CD8-positive, alpha-beta T cell (primary cell): ENCODE measurements at regions of chr9 and their contacts with region 1.

Region 1: GRCh38 chr9:131739980-131740648 is at the start of gene RAPGEF1:
- DNase-seq: peak; percentile 70 to 94 (median 82)
- ATAC-seq: peak; percentile 63
- H3K4me3 ChIP-seq: peak within 1 kb of the TSS; percentile 66 to 70
- H3K4me3 Mint-ChIP-seq: peak within 1 kb of the TSS; percentile 90
- H3K27ac ChIP-seq: peak within 1 kb of the TSS; percentile 21 to 38
- H3K27ac Mint-ChIP-seq: peak within 1 kb of the TSS; percentile 87
- H3K4me1 ChIP-seq: peaks cover 61% of the 10 kb centered on the region
- H3K4me1 Mint-ChIP-seq: peaks cover 56% of the 10 kb centered on the region
- H3K27me3 ChIP-seq: no peaks in the 10 kb centered on the region
- H3K27me3 Mint-ChIP-seq: no peaks in the 10 kb centered on the region
- CTCF ChIP-seq: peak; percentile 80
- total RNA-seq, gene RAPGEF1: 127 to 130 TPM

Region 2: GRCh38 chr9:131530920-131531832 is 208.9 kb before region 1 on chr9 and contains the start of gene UCK1:
- CTCF ChIA-PET with region 1: interaction called, 4 read pairs
- POLR2A ChIA-PET with region 1: no interaction called
- intact Hi-C with region 1: loop called in 1 of 2 experiments (anchors 5 kb)
- DNase-seq: peak; percentile 42 to 89 (median 68)
- ATAC-seq: peak; percentile 91
- H3K4me3 ChIP-seq: peak within 1 kb of the TSS; percentile 64 to 73
- H3K4me3 Mint-ChIP-seq: peak within 1 kb of the TSS; percentile 74
- H3K27ac ChIP-seq: peak within 1 kb of the TSS; percentile 51 to 53
- H3K27ac Mint-ChIP-seq: peak within 1 kb of the TSS; percentile 55
- H3K4me1 ChIP-seq: peaks cover 35% of the 10 kb centered on the region
- H3K4me1 Mint-ChIP-seq: peaks cover 35% of the 10 kb centered on the region
- H3K27me3 ChIP-seq: no peaks in the 10 kb centered on the region
- H3K27me3 Mint-ChIP-seq: no peaks in the 10 kb centered on the region
- CTCF ChIP-seq: no peak
- total RNA-seq, gene UCK1: 22.6 to 24.7 TPM

Region 3: GRCh38 chr9:131590908-131591844 is 148.9 kb before region 1 on chr9:
- CTCF ChIA-PET with region 1: interaction called, 151 read pairs
- POLR2A ChIA-PET with region 1: interaction called, 5 read pairs
- intact Hi-C with region 1: loop called (anchors 1 kb)
- DNase-seq: peak; percentile 56 to 88 (median 79)
- ATAC-seq: peak; percentile 91
- H3K4me3 ChIP-seq: no peak overlapping the region
- H3K4me3 Mint-ChIP-seq: no peak overlapping the region
- H3K27ac ChIP-seq: peak overlapping the region in 1 of 2 experiments; percentile 19
- H3K27ac Mint-ChIP-seq: peak overlapping the region; percentile 88
- H3K4me1 ChIP-seq: peaks cover 18% of the 10 kb centered on the region
- H3K4me1 Mint-ChIP-seq: peaks cover 23% of the 10 kb centered on the region
- H3K27me3 ChIP-seq: no peaks in the 10 kb centered on the region
- H3K27me3 Mint-ChIP-seq: no peaks in the 10 kb centered on the region
- CTCF ChIP-seq: peak; percentile 83

Region 4: DNA sequence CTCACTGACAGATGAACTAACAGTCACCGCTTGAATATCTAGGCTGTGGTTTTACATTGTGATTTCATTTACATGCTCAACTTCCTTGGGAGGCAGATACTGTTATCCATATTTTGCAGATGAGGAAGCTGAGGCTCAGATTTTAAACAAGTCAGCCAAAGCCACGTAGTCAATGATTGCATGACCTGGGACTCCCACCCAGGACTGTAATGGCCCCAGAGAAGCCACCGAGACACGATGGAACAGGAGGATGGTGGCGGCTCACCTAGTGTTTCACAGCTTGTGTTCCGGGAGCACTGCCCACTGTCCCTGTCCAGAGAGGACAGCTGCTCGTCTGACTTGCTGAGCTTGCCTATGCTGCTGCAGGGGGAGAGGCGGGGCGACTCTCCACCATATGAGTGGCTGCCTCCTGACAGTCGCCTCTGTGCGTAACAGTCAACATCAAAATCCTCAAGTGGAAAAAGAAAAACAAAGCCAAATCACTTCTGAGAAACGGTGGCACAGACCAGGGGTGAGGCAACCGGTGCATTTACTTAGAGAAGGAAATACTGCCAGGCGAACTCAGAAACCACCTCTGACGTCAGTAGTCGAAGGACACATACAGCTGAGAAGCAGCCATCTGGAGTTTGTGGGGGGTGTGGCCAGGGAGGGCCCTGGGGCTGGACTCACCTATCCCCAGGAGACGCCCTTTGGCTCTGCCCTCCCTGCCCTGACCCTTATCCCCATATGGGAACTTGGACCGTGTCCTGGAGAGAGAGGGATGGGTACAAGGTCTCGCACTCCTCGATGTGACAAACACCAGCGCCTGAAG is 112.3 kb before region 1 on chr9:
- CTCF ChIA-PET with region 1: interaction called, 10 read pairs
- POLR2A ChIA-PET with region 1: interaction called, 3 read pairs
- intact Hi-C with region 1: no loop called
- DNase-seq: peak in 8 of 9 experiments; percentile 39 to 96 (median 72)
- ATAC-seq: peak; percentile 79
- H3K4me3 ChIP-seq: peak overlapping the region; percentile 7 to 29
- H3K4me3 Mint-ChIP-seq: peak overlapping the region; percentile 39
- H3K27ac ChIP-seq: peak overlapping the region; percentile 77 to 89
- H3K27ac Mint-ChIP-seq: peak overlapping the region; percentile 93
- H3K4me1 ChIP-seq: peaks cover 27% of the 10 kb centered on the region
- H3K4me1 Mint-ChIP-seq: peaks cover 34% of the 10 kb centered on the region
- H3K27me3 ChIP-seq: no peaks in the 10 kb centered on the region
- H3K27me3 Mint-ChIP-seq: no peaks in the 10 kb centered on the region
- CTCF ChIP-seq: no peak

Region 5: DNA sequence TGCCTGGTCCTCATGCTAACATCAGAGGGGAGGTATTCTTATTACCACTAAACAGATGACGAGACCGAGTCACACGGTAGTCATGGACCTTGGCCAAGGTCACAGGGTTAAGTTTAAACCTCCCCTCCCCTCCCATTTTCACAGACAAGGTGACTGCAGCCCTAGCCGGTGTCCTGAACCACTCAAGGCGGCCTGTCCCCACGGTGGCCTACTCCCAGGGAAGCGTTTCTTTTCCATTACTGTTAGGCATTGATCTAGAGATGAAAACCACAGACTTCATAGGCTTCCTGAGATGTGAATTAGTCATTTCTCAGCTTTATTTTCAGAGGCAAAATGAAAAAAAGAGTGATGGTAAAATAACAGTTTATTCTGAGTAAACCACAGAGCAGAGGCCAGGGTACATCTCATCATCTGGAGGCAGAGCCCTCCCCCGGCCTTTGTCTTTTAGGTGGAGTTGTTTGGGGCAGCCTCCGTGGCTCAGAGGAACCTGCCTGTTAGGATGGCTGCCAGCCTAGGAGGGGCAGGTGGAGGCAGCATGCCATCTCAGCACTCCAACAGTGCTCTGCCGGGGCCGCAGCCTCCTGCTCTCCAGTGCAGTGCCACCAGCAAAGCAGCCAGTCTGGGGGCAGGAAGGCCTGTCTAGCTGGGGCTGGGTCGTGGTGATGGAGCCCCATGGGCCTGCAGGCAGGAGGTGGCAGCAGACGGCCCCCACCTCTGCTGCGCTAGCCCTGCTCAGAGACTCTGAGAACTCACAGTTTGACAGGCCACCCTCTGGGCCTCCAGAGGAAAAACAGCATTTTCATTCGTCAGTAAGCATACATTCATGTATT is 71.5 kb before region 1 on chr9:
- CTCF ChIA-PET with region 1: interaction called, 7 read pairs
- POLR2A ChIA-PET with region 1: interaction called, 6 read pairs
- intact Hi-C with region 1: loop called in 1 of 2 experiments (anchors 2 kb)
- DNase-seq: peak; percentile 41 to 88 (median 73)
- ATAC-seq: peak; percentile 74
- H3K4me3 ChIP-seq: peak overlapping the region; percentile 23 to 29
- H3K4me3 Mint-ChIP-seq: peak overlapping the region; percentile 63
- H3K27ac ChIP-seq: peak overlapping the region; percentile 64 to 94
- H3K27ac Mint-ChIP-seq: peak overlapping the region; percentile 99
- H3K4me1 ChIP-seq: peaks cover 73% of the 10 kb centered on the region
- H3K4me1 Mint-ChIP-seq: peaks cover 83% of the 10 kb centered on the region
- H3K27me3 ChIP-seq: no peaks in the 10 kb centered on the region
- H3K27me3 Mint-ChIP-seq: no peaks in the 10 kb centered on the region
- CTCF ChIP-seq: no peak